Caco-2 (cell line): ENCODE measurements at regions of chr6 and their contacts with region 1.

Region 1: GRCh38 chr6:133568970-133569889 is 319.7 kb upstream of the TCF21 start:
- DNase-seq: peak; percentile 42 to 52
- H3K4me3 ChIP-seq: peak overlapping the region; percentile 13; the same call in 1 of the 2 replicates
- H3K4me3 Mint-ChIP-seq: peak overlapping the region; percentile 73
- H3K27ac Mint-ChIP-seq: no peak overlapping the region
- H3K4me1 ChIP-seq: no peaks in the 10 kb centered on the region
- H3K4me1 Mint-ChIP-seq: no peaks in the 10 kb centered on the region
- H3K27me3 ChIP-seq: no peaks in the 10 kb centered on the region
- H3K27me3 Mint-ChIP-seq: peaks cover 9% of the 10 kb centered on the region
- CTCF ChIP-seq: peak; percentile 77 to 88

Region 2: DNA sequence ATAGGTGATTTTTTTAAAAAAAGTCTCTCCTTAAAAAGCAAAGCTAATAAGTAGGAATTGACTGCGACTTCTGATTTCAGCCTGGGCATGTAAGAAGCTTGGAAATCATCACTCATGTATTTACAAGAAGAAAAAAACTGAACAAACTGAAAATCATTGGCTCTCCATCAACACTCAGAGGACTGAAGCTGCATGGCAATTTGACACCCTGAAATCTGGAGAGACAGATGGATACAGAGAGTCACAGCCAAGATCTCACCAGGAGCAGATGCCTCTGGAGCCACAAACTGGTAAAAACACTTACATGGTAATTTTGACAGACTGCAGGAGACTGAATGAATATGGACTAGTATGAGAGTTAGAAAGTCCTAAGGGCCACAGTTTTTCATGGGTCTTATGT is 128.4 kb after region 1 on chr6:
- CTCF ChIA-PET with region 1: no interaction called
- POLR2A ChIA-PET with region 1: no interaction called
- intact Hi-C with region 1: loop called (anchors 5 kb)
- DNase-seq: no peak
- H3K4me3 ChIP-seq: no peak overlapping the region
- H3K4me3 Mint-ChIP-seq: no peak overlapping the region
- H3K27ac Mint-ChIP-seq: no peak overlapping the region
- H3K4me1 ChIP-seq: no peaks in the 10 kb centered on the region
- H3K4me1 Mint-ChIP-seq: no peaks in the 10 kb centered on the region
- H3K27me3 ChIP-seq: no peaks in the 10 kb centered on the region
- H3K27me3 Mint-ChIP-seq: no peaks in the 10 kb centered on the region
- CTCF ChIP-seq: no peak

Region 3: GRCh38 chr6:133837801-133838349 is 268.6 kb after region 1 on chr6:
- CTCF ChIA-PET with region 1: interaction called, 16 read pairs
- POLR2A ChIA-PET with region 1: interaction called, 3 read pairs
- intact Hi-C with region 1: loop called (anchors 1 kb)
- DNase-seq: peak; percentile 67 to 83
- H3K4me3 ChIP-seq: peak overlapping the region; percentile 47
- H3K4me3 Mint-ChIP-seq: peak overlapping the region; percentile 70
- H3K27ac Mint-ChIP-seq: peak overlapping the region; percentile 48
- H3K4me1 ChIP-seq: no peaks in the 10 kb centered on the region
- H3K4me1 Mint-ChIP-seq: no peaks in the 10 kb centered on the region
- H3K27me3 ChIP-seq: no peaks in the 10 kb centered on the region
- H3K27me3 Mint-ChIP-seq: no peaks in the 10 kb centered on the region
- CTCF ChIP-seq: peak; percentile 89

Region 4: GRCh38 chr6:133923938-133924593 is 354.8 kb after region 1 on chr6:
- CTCF ChIA-PET with region 1: interaction called, 5 read pairs
- POLR2A ChIA-PET with region 1: no interaction called
- intact Hi-C with region 1: loop called (anchors 1 kb)
- DNase-seq: peak; percentile 54 to 69
- H3K4me3 ChIP-seq: no peak overlapping the region
- H3K4me3 Mint-ChIP-seq: no peak overlapping the region
- H3K27ac Mint-ChIP-seq: no peak overlapping the region
- H3K4me1 ChIP-seq: no peaks in the 10 kb centered on the region
- H3K4me1 Mint-ChIP-seq: no peaks in the 10 kb centered on the region
- H3K27me3 ChIP-seq: no peaks in the 10 kb centered on the region
- H3K27me3 Mint-ChIP-seq: peaks cover 12% of the 10 kb centered on the region
- CTCF ChIP-seq: peak; percentile 71 to 77